HepG2 (cell line): ENCODE measurements at regions of chr4 and their contacts with region 1.

Region 1: DNA sequence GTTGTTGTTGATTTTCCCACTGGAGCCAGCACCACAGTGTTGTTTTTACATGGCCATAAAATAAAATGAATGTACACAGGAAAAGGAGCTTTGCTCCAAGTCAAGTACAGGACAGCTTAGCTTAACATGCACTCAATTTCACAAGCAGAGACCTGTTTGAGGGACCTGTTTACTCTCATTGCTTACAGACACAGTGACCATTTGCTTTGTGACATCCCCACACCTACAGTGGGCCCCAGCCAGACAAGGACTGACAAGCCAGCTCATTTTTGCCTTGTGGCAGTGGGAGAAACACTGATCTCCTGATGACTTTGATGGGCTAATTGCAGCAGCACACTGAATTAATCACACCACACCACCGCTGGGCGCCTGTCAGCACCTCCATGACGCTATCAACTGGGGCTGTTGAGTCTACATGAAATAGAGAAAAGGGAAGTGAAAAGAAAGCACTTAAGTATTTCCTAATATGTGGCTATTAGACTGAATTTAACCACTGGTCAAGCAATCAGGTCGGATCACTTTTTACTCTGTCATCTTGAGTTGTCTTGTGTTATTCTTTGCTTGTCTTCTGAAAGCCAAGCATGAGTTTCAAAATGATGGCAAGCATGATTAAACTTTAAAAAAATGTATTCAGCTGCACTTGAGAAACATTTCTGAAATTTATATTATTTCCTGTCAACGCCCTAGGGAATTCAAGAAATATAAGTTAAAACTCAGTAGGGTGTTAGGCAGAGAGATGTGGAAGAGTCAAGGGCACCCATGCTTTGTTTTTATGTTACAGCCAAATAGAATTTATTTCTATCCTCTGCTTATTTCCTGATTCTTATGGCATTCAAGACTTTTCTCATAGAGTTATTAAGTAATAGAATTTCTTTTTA is 557.7 kb downstream of the RAB28 start:
- DNase-seq: peak; percentile 69
- ATAC-seq: peak; percentile 93
- H3K4me3 ChIP-seq: peak overlapping the region in 1 of 3 experiments; percentile 45; a peak in 3 of 6 replicates
- H3K27ac ChIP-seq: peak overlapping the region; percentile 76
- H3K4me1 ChIP-seq: peaks cover 47% of the 10 kb centered on the region
- H3K27me3 ChIP-seq: no peaks in the 10 kb centered on the region
- CTCF ChIP-seq: no peak
- EP300 ChIP-seq: peak in 1 of 2 experiments; percentile 63; a peak in 2 of 4 replicates
- POLR2A ChIP-seq: no peak; a peak in 1 of 4 replicates
- RAD21 ChIP-seq: no peak

Region 2: DNA sequence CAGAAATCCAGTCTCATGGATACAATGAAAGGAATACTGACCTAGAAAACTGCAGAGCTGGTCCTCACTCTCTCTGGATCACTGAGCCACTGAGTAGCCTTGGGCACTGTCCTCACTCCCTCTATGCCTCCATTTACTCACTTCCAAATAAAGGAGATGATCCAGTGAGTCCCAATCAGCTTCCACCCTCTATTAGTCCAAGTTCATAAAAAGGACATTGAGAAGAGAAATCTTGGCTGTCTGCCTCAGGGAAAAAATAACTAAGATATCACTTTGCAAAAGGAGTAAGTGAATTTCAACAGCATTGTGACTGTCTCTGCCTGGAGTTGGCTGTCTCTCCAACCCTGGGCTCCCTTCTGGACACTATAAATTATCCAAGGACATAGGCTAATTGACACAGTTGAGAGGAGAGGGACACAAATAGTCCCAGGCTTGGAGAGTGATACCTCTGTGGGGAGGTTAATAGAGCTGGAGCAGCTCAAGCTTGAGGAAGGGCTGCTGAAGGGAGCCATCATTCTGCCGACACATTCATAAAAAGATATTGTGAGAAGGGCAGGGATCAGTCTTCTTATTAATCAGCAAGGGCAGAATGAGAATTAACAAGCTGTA is 14.6 kb before region 1 on chr4:
- CTCF ChIA-PET with region 1: no interaction called
- POLR2A ChIA-PET with region 1: interaction called, 20 read pairs
- in situ Hi-C with region 1: no loop called
- intact Hi-C with region 1: no loop called
- DNase-seq: no peak
- ATAC-seq: no peak
- H3K4me3 ChIP-seq: no peak overlapping the region
- H3K27ac ChIP-seq: no peak overlapping the region
- H3K4me1 ChIP-seq: peaks cover 15% of the 10 kb centered on the region
- H3K27me3 ChIP-seq: no peaks in the 10 kb centered on the region
- CTCF ChIP-seq: no peak
- EP300 ChIP-seq: no peak
- POLR2A ChIP-seq: no peak
- RAD21 ChIP-seq: no peak

Region 3: GRCh38 chr4:12949719-12950490 is 23.5 kb after region 1 on chr4:
- CTCF ChIA-PET with region 1: no interaction called
- POLR2A ChIA-PET with region 1: interaction called, 18 read pairs
- in situ Hi-C with region 1: no loop called
- intact Hi-C with region 1: no loop called
- DNase-seq: peak; percentile 84
- ATAC-seq: peak; percentile 98
- H3K4me3 ChIP-seq: no peak overlapping the region
- H3K27ac ChIP-seq: peak overlapping the region; percentile 7
- H3K4me1 ChIP-seq: peaks cover 39% of the 10 kb centered on the region
- H3K27me3 ChIP-seq: no peaks in the 10 kb centered on the region; a peak in 1 of 5 replicates
- CTCF ChIP-seq: no peak
- EP300 ChIP-seq: peak; percentile 41 to 88; a peak in 2 of 4 replicates
- POLR2A ChIP-seq: no peak
- RAD21 ChIP-seq: no peak

Region 4: GRCh38 chr4:13705521-13706041 is 779.2 kb after region 1 on chr4:
- CTCF ChIA-PET with region 1: no interaction called
- POLR2A ChIA-PET with region 1: no interaction called
- in situ Hi-C with region 1: no loop called
- intact Hi-C with region 1: no loop called
- DNase-seq: no peak
- ATAC-seq: peak; percentile 77
- H3K4me3 ChIP-seq: no peak overlapping the region
- H3K27ac ChIP-seq: no peak overlapping the region
- H3K4me1 ChIP-seq: peaks cover 12% of the 10 kb centered on the region
- H3K27me3 ChIP-seq: no peaks in the 10 kb centered on the region; a peak in 1 of 5 replicates
- CTCF ChIP-seq: no peak
- EP300 ChIP-seq: no peak
- POLR2A ChIP-seq: no peak
- RAD21 ChIP-seq: no peak